ENCODE measurements at regions of chr9 and their contacts with region 1.

Region 1: DNA sequence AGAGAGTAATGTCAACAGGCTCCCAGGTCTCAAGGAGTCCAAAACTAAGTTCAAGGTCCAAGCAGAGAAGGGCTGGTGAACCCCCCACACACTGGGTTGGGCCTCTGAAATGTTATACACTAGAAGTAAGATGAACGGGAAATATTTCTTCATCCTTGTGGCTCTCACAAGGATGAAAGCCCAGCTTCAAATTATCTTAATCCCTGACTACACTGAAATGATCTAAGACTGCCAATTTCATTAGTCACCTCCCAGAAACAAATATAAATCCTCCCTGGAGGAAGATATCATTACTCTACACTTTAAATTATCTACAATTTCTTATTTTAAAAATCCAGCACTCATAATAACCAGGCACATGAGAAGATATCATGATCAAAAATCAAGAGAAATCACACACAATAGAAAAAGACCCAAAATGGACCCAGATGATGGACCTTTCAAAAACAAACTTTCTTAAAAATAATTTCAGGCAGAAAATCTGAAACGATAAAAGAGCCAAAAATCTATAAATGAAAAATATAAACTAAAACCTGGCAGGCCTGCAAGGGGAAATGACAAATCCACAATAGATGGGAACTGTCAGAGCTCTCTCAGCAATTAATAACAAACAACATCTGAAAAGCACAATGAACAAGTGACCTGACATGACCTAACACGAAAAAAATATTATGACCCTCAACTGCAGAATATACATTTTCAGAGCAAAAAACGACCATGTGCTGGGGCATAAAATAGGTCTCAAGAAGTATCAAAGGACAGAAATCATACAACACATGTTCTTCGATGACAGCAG is 117.4 kb downstream of the GPR21 start:
- DNase-seq: no peak
- ATAC-seq: no peak
- H3K4me3 ChIP-seq: no peak overlapping the region
- H3K27ac ChIP-seq: no peak overlapping the region
- H3K4me1 ChIP-seq: no peaks in the 10 kb centered on the region
- H3K27me3 ChIP-seq: no peaks in the 10 kb centered on the region
- CTCF ChIP-seq: no peak

Region 2: DNA sequence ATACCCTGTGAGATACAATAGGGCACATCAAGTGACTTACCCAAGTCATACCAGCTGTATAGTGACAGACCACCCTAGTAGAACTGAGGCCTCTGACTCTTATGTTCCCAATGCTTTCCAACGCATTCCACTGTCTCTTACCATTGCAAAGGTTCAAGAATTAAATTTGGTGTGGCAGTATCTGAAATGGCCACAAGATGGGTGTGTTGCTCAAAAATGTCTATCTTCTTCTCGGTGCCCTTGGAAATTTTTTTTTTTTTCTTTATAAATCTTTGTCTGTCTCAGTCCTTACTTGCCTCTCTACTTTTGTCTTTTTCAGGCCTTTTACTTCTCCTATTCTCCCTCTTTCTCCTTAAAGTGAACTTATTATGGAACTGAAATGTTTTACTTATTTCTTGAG is 69.1 kb before region 1 on chr9:
- intact Hi-C with region 1: loop called in 1 of 2 experiments (anchors 10 kb)
- DNase-seq: no peak
- ATAC-seq: peak in 1 of 4 donors; percentile 35
- H3K4me3 ChIP-seq: no peak overlapping the region
- H3K27ac ChIP-seq: no peak overlapping the region
- H3K4me1 ChIP-seq: no peaks in the 10 kb centered on the region
- H3K27me3 ChIP-seq: no peaks in the 10 kb centered on the region
- CTCF ChIP-seq: peak; percentile 35